Caco-2 (cell line): ENCODE measurements at regions of chr17 and their contacts with region 1.

Region 1: DNA sequence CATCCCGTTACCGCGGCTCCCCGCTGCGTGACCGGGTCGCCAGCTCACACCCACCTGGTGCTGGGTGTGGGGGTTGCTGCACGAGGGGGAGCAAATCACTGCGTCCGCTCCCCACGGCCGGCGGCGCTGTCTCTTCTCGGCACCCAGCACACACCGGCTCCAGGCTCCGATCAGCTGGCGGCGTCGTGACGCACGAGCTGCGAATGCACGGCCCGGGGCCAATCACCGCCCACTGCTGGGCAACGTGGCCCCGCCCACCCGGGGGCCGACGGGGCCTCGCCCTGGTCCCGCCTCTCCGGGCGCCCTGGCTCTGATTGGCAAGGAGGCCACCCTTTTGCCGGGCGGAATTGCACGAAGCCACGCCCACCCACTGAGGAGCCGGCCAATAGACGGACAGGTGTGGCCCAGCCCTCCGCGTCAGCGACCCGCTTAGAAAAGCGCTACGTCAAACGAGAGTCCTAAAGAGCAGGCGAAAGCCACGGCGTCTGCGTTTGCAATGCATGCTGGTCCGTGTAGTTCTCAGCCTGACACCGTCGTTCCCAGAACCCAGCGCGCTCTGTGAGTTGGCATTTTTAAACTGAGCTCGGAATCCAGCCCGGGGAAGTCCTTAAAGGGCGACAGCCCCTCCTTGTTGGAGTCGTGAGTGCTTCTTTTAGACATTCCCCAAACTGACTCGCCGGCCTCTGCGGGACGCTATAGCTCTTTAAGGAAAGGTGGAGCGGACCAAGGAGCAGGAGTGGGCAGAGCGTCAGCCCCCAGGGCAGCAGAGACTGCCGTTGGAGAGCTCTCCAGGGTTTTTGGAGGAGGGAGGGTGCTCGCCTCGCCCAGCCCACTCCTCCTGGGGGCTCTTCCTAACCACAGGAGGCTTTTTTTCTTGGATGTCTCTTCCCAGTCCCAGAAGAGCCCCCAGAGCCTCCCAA is 6.2 kb upstream of the TLCD2 start:
- DNase-seq: peak; percentile 100
- H3K4me3 ChIP-seq: peak overlapping the region; percentile 94
- H3K4me3 Mint-ChIP-seq: peak overlapping the region; percentile 85
- H3K27ac Mint-ChIP-seq: peak overlapping the region; percentile 99
- H3K4me1 ChIP-seq: peaks cover 29% of the 10 kb centered on the region
- H3K4me1 Mint-ChIP-seq: peaks cover 38% of the 10 kb centered on the region
- H3K27me3 ChIP-seq: no peaks in the 10 kb centered on the region
- H3K27me3 Mint-ChIP-seq: no peaks in the 10 kb centered on the region
- CTCF ChIP-seq: no peak

Region 2: DNA sequence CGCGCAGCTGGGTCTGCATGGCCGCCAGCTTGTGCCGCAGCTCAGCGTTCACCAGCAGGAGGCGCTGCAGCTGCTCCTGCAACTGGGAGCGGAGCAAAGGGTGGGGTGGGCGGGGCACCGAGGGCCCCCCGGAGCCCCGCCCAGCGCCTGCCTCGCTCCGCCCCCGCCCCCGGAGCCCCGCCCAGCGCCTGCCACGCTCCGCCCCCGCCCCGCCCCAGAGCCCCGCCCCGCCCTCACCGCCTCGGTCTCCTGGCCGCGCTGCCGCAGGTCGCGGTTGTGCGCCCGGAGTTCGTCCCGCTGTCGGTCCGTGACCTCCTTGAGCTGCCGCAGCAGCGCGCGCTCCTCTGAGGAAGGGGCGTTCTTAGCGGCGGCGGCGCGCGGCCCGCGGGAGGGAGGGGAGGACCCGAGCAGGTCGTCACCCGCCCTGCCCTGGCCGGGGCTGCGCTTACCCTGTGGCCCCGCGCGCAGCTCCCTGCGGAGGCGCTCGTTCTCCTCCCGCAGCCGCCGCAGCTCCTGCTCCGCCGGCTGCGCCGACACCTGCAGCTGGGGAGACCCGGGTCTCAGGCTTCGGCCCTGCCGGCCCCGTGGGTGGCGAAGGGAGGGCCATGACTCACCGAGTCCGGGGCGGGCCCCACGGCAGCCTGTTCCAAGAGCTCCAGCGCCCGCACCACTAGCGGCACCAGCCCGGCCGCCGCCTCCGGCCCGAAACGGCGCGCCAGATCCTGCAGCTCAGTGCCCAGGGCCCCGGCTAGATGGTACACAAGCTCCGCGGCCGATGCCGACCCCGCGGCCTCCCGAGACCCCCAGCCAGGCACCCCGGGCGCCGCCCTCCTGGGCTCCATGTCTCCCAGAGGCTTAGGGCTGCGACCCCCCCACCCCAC is 67.1 kb before region 1 on chr17:
- CTCF ChIA-PET with region 1: interaction called, 12 read pairs
- POLR2A ChIA-PET with region 1: interaction called, 12 read pairs
- intact Hi-C with region 1: no loop called
- DNase-seq: peak; percentile 84 to 87
- H3K4me3 ChIP-seq: peak overlapping the region; percentile 82
- H3K4me3 Mint-ChIP-seq: peak overlapping the region; percentile 73
- H3K27ac Mint-ChIP-seq: peak overlapping the region; percentile 35
- H3K4me1 ChIP-seq: peaks cover 10% of the 10 kb centered on the region; the same call in 1 of the 2 replicates
- H3K4me1 Mint-ChIP-seq: peaks cover 6% of the 10 kb centered on the region
- H3K27me3 ChIP-seq: no peaks in the 10 kb centered on the region
- H3K27me3 Mint-ChIP-seq: no peaks in the 10 kb centered on the region
- CTCF ChIP-seq: peak; percentile 54 to 69

Region 3: DNA sequence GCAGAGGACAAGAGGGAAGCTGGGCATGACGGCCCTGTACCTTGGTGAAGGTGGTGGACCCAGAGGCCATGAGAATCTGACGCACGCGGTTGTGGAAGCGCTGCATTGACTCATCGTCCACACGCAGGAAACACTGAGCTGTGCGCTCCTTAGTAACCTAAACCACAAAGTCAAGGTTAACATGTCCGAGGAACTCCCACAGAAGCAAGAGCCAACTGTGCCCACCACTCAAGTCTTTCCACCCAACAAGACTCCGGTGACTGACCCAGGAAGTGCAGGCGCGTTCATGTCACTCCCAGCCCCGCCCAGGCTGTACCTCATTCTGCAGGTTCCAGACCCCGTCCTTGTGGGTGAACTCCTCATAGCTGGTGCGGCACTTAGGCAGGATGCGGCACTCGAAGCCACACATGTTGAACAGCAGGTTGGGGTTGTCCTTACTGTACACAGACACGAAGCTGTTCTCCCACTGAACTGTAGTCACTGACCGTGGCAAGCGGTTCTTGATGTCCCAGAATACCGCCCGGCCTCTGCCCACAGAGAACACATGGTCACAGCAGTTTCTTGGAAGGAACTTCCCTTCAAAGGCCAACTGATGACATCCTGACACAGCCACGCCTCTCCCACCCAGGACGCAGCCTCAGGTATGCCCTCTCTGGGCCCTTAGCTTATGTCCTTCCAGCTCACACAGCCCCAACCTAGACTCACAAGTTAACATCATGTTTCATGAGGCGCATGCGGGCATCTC is 43.1 kb before region 1 on chr17:
- CTCF ChIA-PET with region 1: interaction called, 14 read pairs
- POLR2A ChIA-PET with region 1: interaction called, 16 read pairs
- intact Hi-C with region 1: loop called (anchors 2 kb)
- DNase-seq: no peak
- H3K4me3 ChIP-seq: no peak overlapping the region
- H3K4me3 Mint-ChIP-seq: no peak overlapping the region
- H3K27ac Mint-ChIP-seq: no peak overlapping the region
- H3K4me1 ChIP-seq: no peaks in the 10 kb centered on the region
- H3K4me1 Mint-ChIP-seq: peaks cover 23% of the 10 kb centered on the region
- H3K27me3 ChIP-seq: no peaks in the 10 kb centered on the region
- H3K27me3 Mint-ChIP-seq: no peaks in the 10 kb centered on the region
- CTCF ChIP-seq: no peak

Region 4: GRCh38 chr17:1730328-1731193 is 14.2 kb after region 1 on chr17:
- CTCF ChIA-PET with region 1: interaction called, 5 read pairs
- POLR2A ChIA-PET with region 1: interaction called, 21 read pairs
- intact Hi-C with region 1: no loop called
- DNase-seq: no peak
- H3K4me3 ChIP-seq: no peak overlapping the region
- H3K4me3 Mint-ChIP-seq: no peak overlapping the region
- H3K27ac Mint-ChIP-seq: no peak overlapping the region
- H3K4me1 ChIP-seq: peaks cover 2% of the 10 kb centered on the region
- H3K4me1 Mint-ChIP-seq: peaks cover 1% of the 10 kb centered on the region
- H3K27me3 ChIP-seq: no peaks in the 10 kb centered on the region
- H3K27me3 Mint-ChIP-seq: no peaks in the 10 kb centered on the region
- CTCF ChIP-seq: no peak

Region 5: DNA sequence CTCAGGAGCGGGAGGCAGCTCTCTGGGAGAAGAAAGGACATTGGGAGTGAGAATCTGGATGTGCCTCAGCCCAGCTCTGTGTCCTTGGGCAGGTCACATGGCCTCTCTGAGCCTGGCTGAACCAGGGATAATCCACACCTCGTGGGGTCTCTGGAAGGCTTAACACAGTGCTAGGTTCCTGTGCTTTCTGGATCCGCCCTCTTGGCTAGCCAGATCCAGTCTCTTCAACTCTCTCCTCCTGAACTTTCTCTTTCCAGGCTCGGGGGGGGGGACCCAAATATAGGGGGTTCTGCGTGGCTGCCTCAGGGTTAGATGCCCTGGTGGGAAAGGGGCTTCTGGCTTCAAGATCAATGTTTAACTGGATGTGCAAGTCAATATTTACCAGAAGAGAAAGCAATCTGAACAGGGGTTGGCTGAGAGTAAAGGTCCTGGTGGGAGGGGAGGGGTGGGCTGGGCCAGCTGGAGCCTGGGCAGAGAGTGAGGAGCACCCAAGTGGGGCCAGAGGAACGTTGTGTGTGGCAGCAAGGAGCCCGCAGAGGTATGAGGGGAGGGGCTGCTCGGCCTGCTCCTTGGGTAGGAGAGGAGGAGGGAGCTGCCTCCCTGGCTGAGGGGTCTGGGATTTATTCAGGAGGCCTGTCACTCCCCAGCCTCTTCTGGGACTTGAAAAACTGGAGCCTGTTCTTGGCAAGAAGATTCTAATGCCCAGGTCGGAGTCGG is 26.2 kb after region 1 on chr17 and contains the start of gene SERPINF2:
- CTCF ChIA-PET with region 1: interaction called, 17 read pairs
- POLR2A ChIA-PET with region 1: interaction called, 13 read pairs
- intact Hi-C with region 1: no loop called
- DNase-seq: peak; percentile 59 to 72
- H3K4me3 ChIP-seq: peak within 1 kb of the TSS; percentile 34
- H3K4me3 Mint-ChIP-seq: peak within 1 kb of the TSS; percentile 63
- H3K27ac Mint-ChIP-seq: peak within 1 kb of the TSS; percentile 60
- H3K4me1 ChIP-seq: peaks cover 20% of the 10 kb centered on the region
- H3K4me1 Mint-ChIP-seq: peaks cover 16% of the 10 kb centered on the region
- H3K27me3 ChIP-seq: no peaks in the 10 kb centered on the region
- H3K27me3 Mint-ChIP-seq: no peaks in the 10 kb centered on the region
- CTCF ChIP-seq: no peak
- total RNA-seq, gene SERPINF2: 59.9 and 63.8 TPM in 2 replicates

Region 6: GRCh38 chr17:1783834-1784611 is 67.7 kb after region 1 on chr17:
- CTCF ChIA-PET with region 1: interaction called, 40 read pairs
- POLR2A ChIA-PET with region 1: interaction called, 16 read pairs
- intact Hi-C with region 1: loop called (anchors 1 kb)
- DNase-seq: peak in 1 of 2 experiments; percentile 62
- H3K4me3 ChIP-seq: no peak overlapping the region
- H3K4me3 Mint-ChIP-seq: no peak overlapping the region
- H3K27ac Mint-ChIP-seq: peak overlapping the region; percentile 44
- H3K4me1 ChIP-seq: peaks cover 4% of the 10 kb centered on the region; the same call in 1 of the 2 replicates
- H3K4me1 Mint-ChIP-seq: no peaks in the 10 kb centered on the region
- H3K27me3 ChIP-seq: no peaks in the 10 kb centered on the region
- H3K27me3 Mint-ChIP-seq: no peaks in the 10 kb centered on the region
- CTCF ChIP-seq: peak; percentile 82 to 90

Region 7: DNA sequence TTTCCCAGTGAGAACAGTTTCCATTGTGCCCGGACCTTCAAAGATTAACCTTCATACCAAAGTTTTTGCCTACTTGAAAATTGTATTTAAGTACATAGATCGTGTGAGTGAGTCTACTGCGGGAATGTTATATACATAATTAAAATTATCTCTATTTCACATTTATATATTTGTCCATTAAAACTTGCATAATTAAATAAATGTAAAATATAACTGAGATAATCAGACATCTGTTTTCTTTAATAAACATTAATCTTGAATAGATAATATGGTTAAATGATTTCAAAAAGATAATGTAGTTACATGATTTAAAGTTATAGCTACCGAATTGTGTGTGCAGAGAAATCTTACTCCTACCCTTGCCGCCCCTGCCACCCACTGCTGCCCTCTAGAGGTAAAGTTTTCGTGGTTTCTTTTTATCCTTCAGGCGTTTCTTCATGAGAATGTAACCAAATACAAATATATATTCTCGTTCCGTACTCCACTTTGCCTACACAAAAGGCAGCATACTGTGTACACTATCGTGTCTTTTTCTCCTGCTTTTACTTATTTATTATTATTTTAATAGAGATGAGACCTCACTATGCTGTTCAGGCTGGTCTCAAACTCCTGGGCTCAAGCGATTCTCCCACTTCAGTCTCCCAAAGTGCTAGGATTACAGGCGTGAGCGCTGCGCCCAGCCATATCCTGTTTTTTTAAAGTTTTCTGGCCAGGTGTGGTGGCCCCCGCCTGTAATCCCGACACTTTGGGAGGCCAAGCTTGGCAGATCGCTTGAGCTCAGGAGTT is 149.1 kb after region 1 on chr17:
- CTCF ChIA-PET with region 1: interaction called, 8 read pairs
- POLR2A ChIA-PET with region 1: interaction called, 3 read pairs
- intact Hi-C with region 1: loop called (anchors 10 kb)
- DNase-seq: peak in 1 of 2 experiments; percentile 71
- H3K4me3 ChIP-seq: no peak overlapping the region
- H3K4me3 Mint-ChIP-seq: no peak overlapping the region
- H3K27ac Mint-ChIP-seq: no peak overlapping the region
- H3K4me1 ChIP-seq: no peaks in the 10 kb centered on the region
- H3K4me1 Mint-ChIP-seq: peaks cover 6% of the 10 kb centered on the region
- H3K27me3 ChIP-seq: no peaks in the 10 kb centered on the region
- H3K27me3 Mint-ChIP-seq: no peaks in the 10 kb centered on the region
- CTCF ChIP-seq: peak; percentile 62 to 71